Activated B cell treated with CpG ODN at 0.5 μM for 24 hours (primary cell): ENCODE measurements at regions of chr1 and their contacts with region 1.

Region 1: DNA sequence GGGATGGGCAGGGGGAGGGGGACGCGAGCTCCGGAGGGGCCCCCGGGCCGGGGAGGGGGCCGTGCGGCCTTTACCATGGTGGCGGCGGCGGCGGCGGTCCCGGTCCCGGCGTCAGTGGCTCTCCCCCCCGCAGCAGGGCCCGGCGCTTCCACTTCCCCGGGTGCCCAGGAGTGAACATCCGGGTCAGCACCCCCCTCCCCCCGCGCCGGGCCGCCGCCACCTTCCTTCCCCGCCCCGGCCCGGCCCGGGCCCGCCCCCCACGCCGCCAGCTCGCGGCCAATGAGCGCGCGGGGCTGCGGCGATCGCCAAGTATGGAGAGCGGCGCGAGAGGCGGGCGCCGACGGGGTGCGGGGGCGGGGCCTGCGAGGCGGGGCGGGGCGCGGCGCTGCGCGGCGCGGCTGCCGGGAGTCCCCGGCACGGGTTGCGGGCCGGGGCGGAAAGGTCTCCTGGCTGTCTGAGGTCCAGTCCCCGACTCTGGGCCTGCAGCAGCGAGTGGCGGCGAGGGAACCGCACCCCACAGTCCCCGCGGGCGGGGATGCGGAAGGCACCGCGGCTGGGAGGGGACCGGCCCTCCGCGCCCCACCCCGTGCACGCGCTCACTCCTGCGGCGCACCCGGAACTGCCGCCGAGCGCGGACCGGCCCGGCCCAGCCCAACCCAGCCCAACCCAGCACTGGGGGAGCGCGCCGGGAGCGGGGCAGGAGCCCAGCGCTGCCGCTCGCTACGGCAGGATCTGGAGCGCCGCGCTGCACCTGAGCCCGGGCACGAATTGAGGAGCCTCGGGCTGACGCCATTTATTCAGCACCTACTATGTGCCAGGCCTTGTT is at the start of gene CAPZB:
- DNase-seq: peak; percentile 91
- ATAC-seq: peak; percentile 92
- H3K4me3 Mint-ChIP-seq: peak within 1 kb of the TSS; percentile 90
- H3K27ac Mint-ChIP-seq: peak within 1 kb of the TSS; percentile 91
- H3K4me1 Mint-ChIP-seq: peaks cover 54% of the 10 kb centered on the region
- H3K27me3 Mint-ChIP-seq: no peaks in the 10 kb centered on the region
- CTCF ChIP-seq: no peak
- total RNA-seq, gene CAPZB: 334 and 349 TPM in 2 replicates

Region 2: DNA sequence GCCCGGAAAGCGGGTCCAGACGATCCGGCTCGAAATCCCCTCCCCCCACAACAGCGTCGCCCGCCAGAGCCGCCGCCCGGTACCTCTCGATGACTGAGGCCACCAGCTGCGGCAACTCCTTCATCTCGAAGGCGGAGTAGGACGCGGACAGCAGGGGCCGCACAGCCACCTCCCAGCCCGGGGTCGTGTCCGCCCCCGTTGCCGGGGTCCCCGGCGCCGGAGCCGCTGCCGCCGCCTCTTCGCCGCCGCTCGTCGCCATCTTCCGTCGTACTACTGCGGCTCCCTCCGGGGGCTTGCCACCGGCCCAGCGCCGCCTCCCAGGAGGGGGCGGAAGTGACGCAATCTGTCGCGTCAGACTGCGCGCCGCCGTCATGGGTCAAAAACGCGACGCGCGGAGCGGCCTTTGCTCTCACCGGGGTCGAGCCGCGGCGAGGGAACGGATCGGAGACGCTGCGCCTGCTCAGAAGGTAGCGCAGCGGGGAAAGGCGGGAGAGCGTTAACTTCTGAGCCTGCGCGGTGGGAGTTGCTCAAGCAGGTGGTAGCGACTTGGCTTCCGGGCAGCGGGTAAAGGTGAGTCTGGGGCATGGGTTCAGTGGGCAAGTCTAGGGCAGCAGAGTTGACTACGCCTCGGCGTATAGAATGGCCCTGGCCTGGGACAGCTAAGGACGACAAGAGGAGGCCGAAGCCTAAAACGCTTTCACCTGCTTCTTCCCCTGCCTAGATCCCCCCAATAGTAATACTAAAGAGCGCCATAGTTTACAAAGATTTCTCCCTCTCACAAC is 275.4 kb before region 1 on chr1 and contains the start of gene UBR4:
- CTCF ChIA-PET with region 1: no interaction called
- POLR2A ChIA-PET with region 1: no interaction called
- intact Hi-C with region 1: loop called (anchors 5 kb)
- DNase-seq: peak; percentile 98
- ATAC-seq: peak; percentile 77
- H3K4me3 Mint-ChIP-seq: peak within 1 kb of the TSS; percentile 95
- H3K27ac Mint-ChIP-seq: peak within 1 kb of the TSS; percentile 97
- H3K4me1 Mint-ChIP-seq: peaks cover 57% of the 10 kb centered on the region
- H3K27me3 Mint-ChIP-seq: no peaks in the 10 kb centered on the region
- CTCF ChIP-seq: no peak
- total RNA-seq, gene UBR4: 221 and 262 TPM in 2 replicates

Region 3: DNA sequence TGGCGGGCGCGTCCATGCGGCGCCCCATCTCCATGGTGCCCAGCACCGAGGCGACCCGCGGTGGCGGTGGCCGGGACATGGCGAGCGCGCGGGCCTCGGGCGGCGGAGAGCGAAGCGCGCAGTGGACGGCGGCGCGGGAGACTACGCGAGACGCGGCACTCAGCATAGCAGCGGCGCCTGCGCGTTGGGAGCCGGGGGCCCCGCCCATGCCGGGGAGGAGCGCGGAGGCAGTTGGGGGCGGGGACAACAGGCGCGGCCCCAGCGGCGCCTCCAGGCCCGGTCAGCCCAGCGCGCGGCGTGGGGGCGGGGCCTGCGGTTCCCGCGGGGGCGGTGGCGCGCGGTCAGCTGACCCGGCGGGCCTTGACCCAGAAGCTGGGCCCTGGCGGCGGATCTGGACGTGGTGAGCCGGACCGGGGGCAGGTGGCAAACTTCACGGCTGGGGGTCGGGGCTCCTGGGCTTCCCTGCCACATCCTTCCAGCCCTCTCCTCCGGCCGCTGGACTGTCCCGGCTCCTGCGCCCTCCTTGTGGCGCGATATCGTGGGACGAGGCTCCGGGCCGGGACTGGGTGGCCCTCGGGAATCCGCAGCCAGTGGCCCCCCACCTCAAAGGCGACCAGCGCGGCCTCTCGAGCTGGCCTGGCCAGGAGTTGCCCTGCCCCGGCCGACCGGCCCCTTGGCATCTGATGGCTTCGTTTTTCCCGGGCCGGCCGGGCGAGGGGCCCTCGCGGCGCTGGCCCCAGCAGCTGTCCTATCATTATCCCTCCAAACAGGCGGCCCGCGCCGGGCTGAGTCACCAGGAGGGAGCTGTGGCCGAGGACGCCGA is 173.4 kb before region 1 on chr1 and contains the starts of genes AKR7A2 and SLC66A1:
- CTCF ChIA-PET with region 1: no interaction called
- POLR2A ChIA-PET with region 1: interaction called, 8 read pairs
- intact Hi-C with region 1: loop called (anchors 5 kb)
- DNase-seq: peak; percentile 96
- ATAC-seq: peak; percentile 91
- H3K4me3 Mint-ChIP-seq: peak within 1 kb of the TSS; percentile 90
- H3K27ac Mint-ChIP-seq: peak within 1 kb of the TSS; percentile 61
- H3K4me1 Mint-ChIP-seq: peaks cover 58% of the 10 kb centered on the region
- H3K27me3 Mint-ChIP-seq: no peaks in the 10 kb centered on the region
- CTCF ChIP-seq: no peak
- total RNA-seq, gene AKR7A2: 29.9 and 30.3 TPM in 2 replicates
- total RNA-seq, gene SLC66A1: 9.1 and 11.9 TPM in 2 replicates

Region 4: DNA sequence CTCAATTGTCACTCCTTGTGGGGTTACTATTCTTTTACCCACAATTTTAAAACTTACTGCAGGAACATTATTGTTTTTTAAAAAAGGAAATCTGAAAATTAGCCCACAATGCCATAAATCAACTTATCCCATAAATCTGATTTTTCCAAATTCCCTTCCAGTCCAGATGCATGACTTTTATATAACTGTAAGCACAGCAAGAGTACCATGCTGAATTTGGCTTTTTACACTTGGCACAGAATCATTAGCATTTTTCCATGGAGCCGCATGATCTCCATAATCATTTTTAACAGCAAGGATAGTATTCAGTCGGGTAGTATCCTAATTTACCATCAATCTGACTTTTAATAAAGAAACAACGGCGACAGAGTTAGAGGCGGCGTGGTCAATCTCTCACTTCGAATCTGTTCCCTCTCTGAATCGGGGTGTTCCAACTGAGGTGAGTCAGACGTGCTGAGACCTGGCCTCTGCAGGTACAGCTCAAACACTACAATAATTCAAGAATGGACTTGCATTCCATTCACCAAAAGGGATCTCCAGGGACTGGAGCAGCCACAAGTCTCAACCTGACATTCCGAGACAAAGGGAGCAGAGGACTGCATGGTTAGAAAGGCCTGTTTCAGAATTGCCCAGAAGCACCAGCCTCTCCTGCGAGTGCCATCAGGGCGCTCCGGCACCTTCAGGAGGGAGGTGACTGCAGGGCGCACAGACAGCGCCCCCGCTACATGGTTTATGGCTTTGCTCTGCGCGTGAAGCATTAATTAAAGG is 124.5 kb before region 1 on chr1:
- CTCF ChIA-PET with region 1: no interaction called
- POLR2A ChIA-PET with region 1: no interaction called
- intact Hi-C with region 1: no loop called
- DNase-seq: no peak
- ATAC-seq: no peak
- H3K4me3 Mint-ChIP-seq: no peak overlapping the region
- H3K27ac Mint-ChIP-seq: no peak overlapping the region
- H3K4me1 Mint-ChIP-seq: peaks cover 13% of the 10 kb centered on the region
- H3K27me3 Mint-ChIP-seq: no peaks in the 10 kb centered on the region
- CTCF ChIP-seq: no peak

Region 5: DNA sequence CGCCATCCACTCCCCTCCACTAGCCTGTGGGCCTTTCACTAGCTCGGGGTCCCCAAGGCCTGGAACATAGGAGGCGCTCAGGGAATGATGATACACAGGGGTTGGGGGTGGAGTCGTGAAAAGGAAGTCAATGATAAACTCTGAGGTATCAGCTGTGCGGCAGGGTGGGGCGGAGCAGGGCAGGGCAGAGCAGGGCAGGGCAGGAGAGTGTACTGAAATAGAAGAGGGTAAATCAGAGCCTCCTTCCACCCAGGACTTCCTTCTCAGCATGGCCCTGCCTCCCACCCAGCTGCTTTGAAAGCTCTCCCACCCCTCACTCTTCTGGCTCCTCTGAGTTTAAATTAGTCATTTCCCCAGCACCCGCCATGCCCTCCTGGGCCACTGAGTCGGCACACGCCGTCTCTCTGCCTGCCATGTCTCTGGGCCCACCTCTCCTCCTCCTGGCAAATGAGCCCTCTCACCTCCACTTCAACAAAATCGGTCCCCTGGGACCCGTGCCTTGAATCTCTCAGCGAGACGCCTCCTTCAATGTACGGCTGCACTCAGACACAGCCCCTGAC is 17.1 kb before region 1 on chr1:
- CTCF ChIA-PET with region 1: interaction called, 4 read pairs
- POLR2A ChIA-PET with region 1: interaction called, 45 read pairs
- intact Hi-C with region 1: loop called (anchors 2 kb)
- DNase-seq: no peak
- ATAC-seq: peak; percentile 74
- H3K4me3 Mint-ChIP-seq: peak overlapping the region; percentile 76
- H3K27ac Mint-ChIP-seq: peak overlapping the region; percentile 95
- H3K4me1 Mint-ChIP-seq: peaks cover 98% of the 10 kb centered on the region
- H3K27me3 Mint-ChIP-seq: no peaks in the 10 kb centered on the region
- CTCF ChIP-seq: no peak

Region 6: DNA sequence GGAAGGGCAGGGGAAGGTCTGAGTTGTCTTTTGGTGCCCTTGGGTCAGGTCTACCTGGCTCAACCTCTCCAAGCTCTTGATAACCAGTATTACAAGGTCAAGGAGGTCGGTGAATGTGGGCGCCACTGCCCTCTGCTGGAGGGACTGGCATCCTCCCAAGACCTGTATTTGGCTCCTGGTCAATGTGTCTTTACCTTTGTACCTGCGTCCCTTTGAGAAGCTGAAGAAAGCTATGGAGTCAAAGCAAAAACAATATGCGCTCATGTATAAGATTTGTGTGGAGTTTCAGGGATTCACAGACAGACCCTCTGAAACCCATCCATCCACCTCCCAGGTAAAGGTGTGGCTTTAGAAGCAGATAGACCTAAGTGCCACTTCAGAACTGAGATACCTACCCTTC is 96.7 kb after region 1 on chr1:
- CTCF ChIA-PET with region 1: interaction called, 22 read pairs
- POLR2A ChIA-PET with region 1: no interaction called
- intact Hi-C with region 1: loop called (anchors 1 kb)
- DNase-seq: peak; percentile 63
- ATAC-seq: peak; percentile 88
- H3K4me3 Mint-ChIP-seq: no peak overlapping the region
- H3K27ac Mint-ChIP-seq: no peak overlapping the region
- H3K4me1 Mint-ChIP-seq: peaks cover 9% of the 10 kb centered on the region
- H3K27me3 Mint-ChIP-seq: no peaks in the 10 kb centered on the region
- CTCF ChIP-seq: no peak

Region 7: GRCh38 chr1:19651141-19651737 is 165.7 kb after region 1 on chr1:
- CTCF ChIA-PET with region 1: no interaction called
- POLR2A ChIA-PET with region 1: no interaction called
- intact Hi-C with region 1: loop called (anchors 1 kb)
- DNase-seq: no peak
- ATAC-seq: peak; percentile 65
- H3K4me3 Mint-ChIP-seq: no peak overlapping the region
- H3K27ac Mint-ChIP-seq: no peak overlapping the region
- H3K4me1 Mint-ChIP-seq: peaks cover 4% of the 10 kb centered on the region
- H3K27me3 Mint-ChIP-seq: peaks cover 28% of the 10 kb centered on the region
- CTCF ChIP-seq: no peak